Activated CD4-positive, alpha-beta T cell treated with anti-CD3 and anti-CD28 coated beads for 36 hours (primary cell): ENCODE measurements at regions of chr16 and their contacts with region 1.

Region 1: GRCh38 chr16:20799599-20799998 is 6.7 kb downstream of the ERI2 start:
- DNase-seq: no peak
- ATAC-seq: no peak
- H3K4me3 Mint-ChIP-seq: no peak overlapping the region
- H3K27ac Mint-ChIP-seq: no peak overlapping the region
- H3K4me1 Mint-ChIP-seq: peaks cover 16% of the 10 kb centered on the region
- H3K27me3 Mint-ChIP-seq: no peaks in the 10 kb centered on the region

Region 2: GRCh38 chr16:20484726-20485125 is 314.9 kb before region 1 on chr16:
- CTCF ChIA-PET with region 1: no interaction called
- POLR2A ChIA-PET with region 1: no interaction called
- intact Hi-C with region 1: no loop called
- DNase-seq: no peak
- ATAC-seq: no peak
- H3K4me3 Mint-ChIP-seq: no peak overlapping the region
- H3K27ac Mint-ChIP-seq: no peak overlapping the region
- H3K4me1 Mint-ChIP-seq: no peaks in the 10 kb centered on the region
- H3K27me3 Mint-ChIP-seq: peaks cover 6% of the 10 kb centered on the region

Region 3: GRCh38 chr16:20726661-20727060 is 72.9 kb before region 1 on chr16:
- CTCF ChIA-PET with region 1: no interaction called
- POLR2A ChIA-PET with region 1: no interaction called
- intact Hi-C with region 1: no loop called
- DNase-seq: no peak
- ATAC-seq: no peak
- H3K4me3 Mint-ChIP-seq: no peak overlapping the region
- H3K27ac Mint-ChIP-seq: no peak overlapping the region
- H3K4me1 Mint-ChIP-seq: no peaks in the 10 kb centered on the region
- H3K27me3 Mint-ChIP-seq: no peaks in the 10 kb centered on the region

Region 4: DNA sequence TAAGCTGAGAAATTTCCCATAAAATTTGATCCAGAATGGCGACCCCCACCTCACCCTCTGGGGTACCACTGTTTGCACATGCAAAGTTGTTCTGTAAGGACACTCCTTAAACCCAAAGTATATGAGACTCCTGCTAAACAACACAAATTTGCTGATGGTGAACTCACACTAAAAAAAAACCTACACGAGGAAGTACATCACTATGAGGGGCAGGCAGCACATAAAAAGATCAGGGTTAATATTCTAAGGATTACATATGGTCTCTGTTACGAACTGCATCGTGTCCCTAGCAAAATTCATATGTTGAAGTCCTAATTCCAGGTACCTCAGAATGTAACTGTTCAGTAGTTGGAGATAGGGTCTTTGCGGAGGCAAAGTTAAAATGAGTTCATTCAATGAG is 161.3 kb after region 1 on chr16:
- CTCF ChIA-PET with region 1: no interaction called
- POLR2A ChIA-PET with region 1: no interaction called
- intact Hi-C with region 1: no loop called
- DNase-seq: no peak
- ATAC-seq: no peak
- H3K4me3 Mint-ChIP-seq: no peak overlapping the region
- H3K27ac Mint-ChIP-seq: no peak overlapping the region
- H3K4me1 Mint-ChIP-seq: no peaks in the 10 kb centered on the region
- H3K27me3 Mint-ChIP-seq: no peaks in the 10 kb centered on the region

Region 5: DNA sequence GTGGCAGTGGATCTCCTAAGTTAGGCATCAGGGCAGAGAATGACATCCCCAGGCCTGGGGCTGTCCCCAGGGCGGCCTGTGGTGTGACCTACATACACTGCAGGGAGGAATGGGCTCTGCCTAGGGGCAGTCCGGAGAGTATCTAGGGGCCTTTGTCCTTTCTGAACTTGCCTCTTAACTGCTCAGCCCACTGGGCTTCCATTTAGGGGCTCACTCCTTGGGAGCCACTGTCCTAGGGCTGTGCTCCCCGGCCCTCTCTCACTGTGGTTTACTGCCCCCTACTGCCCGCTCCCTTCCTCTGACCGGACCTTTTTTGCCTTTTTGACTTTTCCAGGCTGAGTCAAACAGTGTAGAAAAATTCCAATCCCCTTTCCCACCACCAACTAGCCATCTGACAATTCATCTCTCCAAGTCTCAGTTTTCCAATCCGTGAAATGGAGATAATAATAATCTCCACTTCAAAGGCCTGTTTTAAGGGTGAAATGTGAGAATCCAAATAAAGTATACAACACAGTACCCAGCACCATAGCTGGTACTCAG is 284.2 kb after region 1 on chr16:
- CTCF ChIA-PET with region 1: interaction called, 3 read pairs
- POLR2A ChIA-PET with region 1: no interaction called
- intact Hi-C with region 1: loop called (anchors 1 to 5 kb)
- DNase-seq: peak; percentile 75
- ATAC-seq: peak; percentile 63
- H3K4me3 Mint-ChIP-seq: no peak overlapping the region
- H3K27ac Mint-ChIP-seq: no peak overlapping the region
- H3K4me1 Mint-ChIP-seq: no peaks in the 10 kb centered on the region
- H3K27me3 Mint-ChIP-seq: peaks cover 3% of the 10 kb centered on the region